Psoas muscle (tissue), 8 donors: ENCODE measurements at regions of chr11 and their contacts with region 1.

Region 1: DNA sequence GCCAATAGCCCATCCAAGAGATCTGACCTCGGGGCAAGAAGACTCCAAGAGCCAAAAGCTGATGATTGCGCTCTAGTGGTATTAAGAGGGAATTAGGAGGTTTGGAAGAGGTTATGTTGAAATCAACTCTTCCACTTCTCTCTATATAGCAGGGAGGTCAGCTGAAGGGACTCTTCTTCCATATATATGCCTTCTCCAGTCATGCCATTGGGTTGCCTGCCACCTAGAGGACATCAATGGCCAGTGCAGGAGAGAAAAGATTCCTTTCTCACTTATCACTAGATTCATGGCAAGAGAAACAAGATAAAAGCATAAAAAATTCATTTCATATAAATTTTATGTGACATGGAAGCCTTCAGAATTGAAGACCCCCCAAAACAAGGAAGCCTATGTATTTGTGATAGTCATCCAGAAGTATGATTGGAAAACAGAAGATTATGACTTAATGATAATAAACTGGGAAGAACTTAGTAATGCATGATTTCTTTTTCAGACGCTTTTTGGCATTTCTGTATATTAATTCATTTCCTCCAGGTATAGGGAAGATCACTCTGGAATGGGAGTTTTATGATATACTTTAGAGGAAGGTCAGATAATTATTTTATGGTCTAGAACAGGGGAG is 435.1 kb upstream of the DDI1 start:
- DNase-seq: no peak
- ATAC-seq: peak; percentile 72 to 85 (median 75)
- H3K4me3 ChIP-seq: no peak overlapping the region
- H3K27ac ChIP-seq: no peak overlapping the region
- H3K4me1 ChIP-seq: no peaks in the 10 kb centered on the region
- H3K27me3 ChIP-seq: no peaks in the 10 kb centered on the region
- CTCF ChIP-seq: peak; percentile 85

Region 2: GRCh38 chr11:103202048-103202651 is 399.2 kb before region 1 on chr11:
- intact Hi-C with region 1: loop called in 1 of 2 experiments (anchors 5 kb)
- DNase-seq: no peak
- ATAC-seq: no peak
- H3K4me3 ChIP-seq: no peak overlapping the region
- H3K27ac ChIP-seq: no peak overlapping the region
- H3K4me1 ChIP-seq: no peaks in the 10 kb centered on the region
- H3K27me3 ChIP-seq: no peaks in the 10 kb centered on the region
- CTCF ChIP-seq: peak; percentile 38

Region 3: GRCh38 chr11:103326070-103326794 is 275.1 kb before region 1 on chr11:
- intact Hi-C with region 1: loop called (anchors 5 kb)
- DNase-seq: no peak
- ATAC-seq: peak in 1 of 4 donors; percentile 52
- H3K4me3 ChIP-seq: no peak overlapping the region
- H3K27ac ChIP-seq: no peak overlapping the region
- H3K4me1 ChIP-seq: no peaks in the 10 kb centered on the region
- H3K27me3 ChIP-seq: no peaks in the 10 kb centered on the region
- CTCF ChIP-seq: peak; percentile 30

Region 4: DNA sequence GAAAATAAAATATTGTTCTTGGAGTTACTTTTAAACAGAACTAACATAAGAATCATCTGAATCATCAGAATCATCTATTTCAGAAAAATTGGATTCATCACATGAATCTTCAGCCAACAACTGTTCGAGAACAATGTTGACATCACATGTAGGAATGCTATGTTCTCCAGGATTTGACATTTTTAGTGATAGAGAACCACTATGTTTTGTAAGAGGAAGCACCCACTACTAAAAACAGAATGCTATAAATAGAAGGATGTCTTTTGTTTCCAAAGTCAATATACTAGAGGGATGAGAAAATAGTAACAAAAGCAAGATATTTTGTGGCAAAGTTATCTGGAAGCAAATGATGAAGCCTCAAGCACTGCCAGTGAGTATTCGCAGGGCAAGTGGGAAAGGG is 171.7 kb after region 1 on chr11:
- intact Hi-C with region 1: no loop called
- DNase-seq: no peak
- ATAC-seq: no peak
- H3K4me3 ChIP-seq: no peak overlapping the region
- H3K27ac ChIP-seq: no peak overlapping the region
- H3K4me1 ChIP-seq: no peaks in the 10 kb centered on the region
- H3K27me3 ChIP-seq: no peaks in the 10 kb centered on the region
- CTCF ChIP-seq: no peak